AG04450 (cell line): ENCODE measurements at regions of chr20 and their contacts with region 1.

Region 1: DNA sequence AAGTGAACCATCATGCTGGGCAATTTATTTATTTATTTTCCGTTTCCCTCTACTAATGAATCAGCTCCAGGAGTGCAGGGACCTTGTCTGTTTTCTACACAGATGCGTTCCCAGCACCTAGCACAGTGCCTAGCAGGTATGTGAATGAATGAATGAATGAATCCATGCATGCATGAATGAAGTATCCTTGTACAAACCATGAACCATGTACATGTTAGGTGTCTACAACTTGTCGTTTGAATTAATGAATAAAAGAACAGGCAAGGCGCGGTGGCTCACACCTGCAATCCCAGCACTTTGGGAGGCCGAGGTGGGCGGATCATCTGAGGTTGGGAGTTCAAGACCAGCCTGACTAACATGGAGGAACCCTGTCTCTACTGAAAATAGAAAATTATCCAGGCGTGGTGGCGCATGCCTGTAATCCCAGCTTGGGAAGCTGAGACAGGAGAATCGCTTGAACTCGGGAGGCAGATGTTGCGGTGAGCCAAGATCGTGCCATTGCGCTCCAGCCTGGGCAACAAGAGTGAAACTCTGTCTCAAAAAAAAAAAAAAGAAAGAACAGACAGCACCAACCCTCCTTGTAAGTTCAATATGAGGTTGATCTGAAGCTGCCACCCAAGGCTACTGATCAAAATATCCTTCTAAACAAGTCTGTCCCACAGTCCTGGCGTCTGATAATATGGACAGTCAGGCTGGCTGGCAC is 27.3 kb upstream of the SLC9A8 start:
- DNase-seq: no peak
- H3K4me3 ChIP-seq: no peak overlapping the region
- H3K27ac ChIP-seq: no peak overlapping the region
- H3K27me3 ChIP-seq: no peaks in the 10 kb centered on the region
- CTCF ChIP-seq: no peak

Region 2: DNA sequence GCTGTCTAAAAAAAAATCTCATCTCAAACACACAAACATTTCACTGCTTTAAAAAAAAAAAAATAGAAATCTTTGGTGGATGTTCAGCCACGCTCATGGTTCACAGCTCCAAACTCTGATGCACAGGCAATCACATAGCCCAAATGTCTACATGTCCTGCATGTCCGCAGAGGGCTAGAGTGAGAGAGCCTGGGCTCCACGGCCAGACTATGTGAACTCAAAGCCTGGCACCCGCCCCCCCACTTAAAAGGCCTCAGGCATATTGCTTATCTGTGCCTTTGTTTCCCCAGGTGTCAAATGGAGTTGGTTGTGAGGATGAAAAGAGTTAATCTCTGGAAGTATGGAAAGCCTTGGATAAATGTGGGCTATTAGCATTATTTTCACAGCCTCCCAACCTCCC is 206.9 kb before region 1 on chr20:
- CTCF ChIA-PET with region 1: interaction called, 13 read pairs
- POLR2A ChIA-PET with region 1: no interaction called
- DNase-seq: no peak
- H3K4me3 ChIP-seq: no peak overlapping the region
- H3K27ac ChIP-seq: no peak overlapping the region
- H3K27me3 ChIP-seq: peaks cover 3% of the 10 kb centered on the region
- CTCF ChIP-seq: no peak

Region 3: GRCh38 chr20:49821870-49822331 is 36.6 kb after region 1 on chr20:
- CTCF ChIA-PET with region 1: no interaction called
- POLR2A ChIA-PET with region 1: no interaction called
- DNase-seq: no peak
- H3K4me3 ChIP-seq: no peak overlapping the region
- H3K27ac ChIP-seq: no peak overlapping the region
- H3K27me3 ChIP-seq: no peaks in the 10 kb centered on the region
- CTCF ChIP-seq: peak; percentile 56

Region 4: GRCh38 chr20:50215101-50215690 is 429.9 kb after region 1 on chr20:
- CTCF ChIA-PET with region 1: no interaction called
- POLR2A ChIA-PET with region 1: no interaction called
- DNase-seq: no peak
- H3K4me3 ChIP-seq: no peak overlapping the region
- H3K27ac ChIP-seq: peak overlapping the region; percentile 2
- H3K27me3 ChIP-seq: no peaks in the 10 kb centered on the region
- CTCF ChIP-seq: no peak